ENCODE measurements at regions of chr1 and their contacts with region 1.

Region 1: DNA sequence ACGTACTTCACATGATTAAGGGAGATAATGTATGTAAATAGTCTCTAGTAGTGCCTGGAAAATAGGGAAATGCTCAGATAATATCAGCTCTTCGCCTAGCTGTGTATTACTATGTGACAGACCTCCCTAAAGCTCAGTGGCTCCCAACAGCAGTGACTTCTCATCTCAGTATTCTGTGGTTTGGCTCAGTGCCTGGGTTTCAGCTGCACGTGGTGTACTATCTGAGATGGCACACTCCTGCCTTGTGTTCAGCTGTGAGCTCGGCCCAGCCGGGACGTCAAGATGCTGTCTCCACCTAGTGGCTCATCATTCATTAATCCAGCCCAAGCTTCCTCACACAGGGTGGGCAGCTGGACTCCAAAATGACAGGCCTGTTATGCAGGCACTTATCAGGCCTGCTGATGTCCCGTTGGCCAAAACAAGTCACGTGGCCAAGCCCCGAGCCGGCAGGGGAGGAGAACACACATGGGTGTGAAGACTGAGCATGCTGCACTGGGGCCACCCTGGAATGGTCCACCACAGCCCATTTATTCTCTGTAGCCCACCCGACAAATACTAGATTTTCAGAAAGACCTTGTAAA is 17.8 kb downstream of the SLFNL1 start:
- DNase-seq: peak; percentile 98
- H3K4me3 Mint-ChIP-seq: no peak overlapping the region
- H3K27ac Mint-ChIP-seq: no peak overlapping the region
- H3K4me1 Mint-ChIP-seq: peaks cover 32% of the 10 kb centered on the region
- H3K27me3 Mint-ChIP-seq: no peaks in the 10 kb centered on the region
- CTCF ChIP-seq: peak; percentile 47

Region 2: GRCh38 chr1:40373338-40374283 is 630.1 kb before region 1 on chr1 and contains the start of gene SMAP2:
- CTCF ChIA-PET with region 1: no interaction called
- POLR2A ChIA-PET with region 1: no interaction called
- intact Hi-C with region 1: no loop called
- DNase-seq: peak; percentile 96
- H3K4me3 Mint-ChIP-seq: peak within 1 kb of the TSS; percentile 90
- H3K27ac Mint-ChIP-seq: peak within 1 kb of the TSS; percentile 69
- H3K4me1 Mint-ChIP-seq: peaks cover 19% of the 10 kb centered on the region
- H3K27me3 Mint-ChIP-seq: no peaks in the 10 kb centered on the region
- CTCF ChIP-seq: no peak
- total RNA-seq, gene SMAP2: 20.2 and 21.2 TPM in 2 replicates

Region 3: GRCh38 chr1:40901886-40902852 is 101.6 kb before region 1 on chr1:
- CTCF ChIA-PET with region 1: no interaction called
- POLR2A ChIA-PET with region 1: no interaction called
- intact Hi-C with region 1: no loop called
- DNase-seq: peak; percentile 83
- H3K4me3 Mint-ChIP-seq: no peak overlapping the region
- H3K27ac Mint-ChIP-seq: peak overlapping the region; percentile 54
- H3K4me1 Mint-ChIP-seq: peaks cover 30% of the 10 kb centered on the region
- H3K27me3 Mint-ChIP-seq: no peaks in the 10 kb centered on the region
- CTCF ChIP-seq: no peak

Region 4: DNA sequence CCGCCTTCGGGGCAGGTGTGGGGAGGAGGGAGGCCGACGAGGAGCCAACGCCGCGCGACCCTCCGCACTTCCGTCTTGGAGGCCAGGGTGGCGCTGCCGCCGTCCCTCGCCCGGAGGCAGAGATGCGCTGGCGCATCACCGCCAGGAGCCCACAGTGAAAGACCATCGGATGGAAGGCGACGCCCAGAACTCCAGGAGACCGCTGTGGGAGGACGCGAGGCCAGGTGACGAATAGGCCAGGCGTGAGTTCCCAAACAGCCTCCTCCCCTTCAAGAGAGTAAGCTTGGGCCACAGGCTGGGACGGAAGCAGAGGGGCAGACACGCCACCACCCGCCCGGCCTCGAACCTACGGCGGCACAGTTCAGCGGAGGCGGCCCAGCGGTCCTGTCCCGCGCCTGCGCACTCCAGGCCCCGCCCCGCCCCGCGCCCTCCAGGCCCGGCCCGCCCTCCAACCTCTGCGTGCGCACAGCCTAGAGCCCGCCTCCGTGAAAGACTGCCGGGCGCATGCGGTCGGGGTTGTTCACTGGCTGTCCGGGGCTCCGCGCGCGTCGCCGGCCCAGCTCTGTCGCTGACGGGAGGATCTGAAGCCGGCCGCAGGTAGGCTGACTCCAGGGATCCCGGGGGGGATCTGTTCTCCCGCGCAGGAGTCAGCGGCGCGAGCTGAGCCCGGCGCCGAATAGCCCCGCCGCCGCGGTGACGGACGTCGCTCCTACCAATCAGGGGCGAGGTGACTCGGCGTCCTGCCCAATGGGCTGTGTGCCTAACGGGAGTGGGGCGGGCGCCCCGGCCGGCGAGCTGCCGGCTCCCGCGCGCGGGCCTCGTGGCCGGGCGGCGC is 24.3 kb before region 1 on chr1 and contains the start of gene CTPS1:
- CTCF ChIA-PET with region 1: interaction called, 10 read pairs
- POLR2A ChIA-PET with region 1: interaction called, 33 read pairs
- intact Hi-C with region 1: no loop called
- DNase-seq: peak; percentile 91
- H3K4me3 Mint-ChIP-seq: peak within 1 kb of the TSS; percentile 82
- H3K27ac Mint-ChIP-seq: peak within 1 kb of the TSS; percentile 90
- H3K4me1 Mint-ChIP-seq: peaks cover 17% of the 10 kb centered on the region
- H3K27me3 Mint-ChIP-seq: no peaks in the 10 kb centered on the region
- CTCF ChIP-seq: no peak
- total RNA-seq, gene CTPS1: 54.1 and 69.9 TPM in 2 replicates

Region 5: DNA sequence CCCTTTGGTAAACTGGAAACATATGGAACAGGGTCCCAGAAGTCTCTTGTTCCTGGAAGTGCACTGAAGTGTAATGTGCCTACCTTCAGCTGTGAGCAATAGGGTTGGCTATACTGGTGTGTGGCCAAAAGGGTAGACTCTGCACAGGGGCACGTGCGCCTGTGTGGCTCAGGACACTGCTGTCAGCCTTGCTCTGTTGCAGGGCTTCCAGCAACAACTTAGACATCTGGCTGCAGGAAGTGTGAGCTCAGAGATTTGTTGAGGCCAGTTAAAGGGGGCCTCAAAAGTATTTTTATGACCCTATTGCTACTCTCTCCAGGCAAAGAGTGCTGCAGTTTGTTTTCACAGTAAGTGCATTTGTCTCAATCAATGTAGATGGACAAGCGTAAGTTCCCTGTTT is 16.8 kb before region 1 on chr1:
- CTCF ChIA-PET with region 1: interaction called, 15 read pairs
- POLR2A ChIA-PET with region 1: interaction called, 33 read pairs
- intact Hi-C with region 1: no loop called
- DNase-seq: no peak
- H3K4me3 Mint-ChIP-seq: no peak overlapping the region
- H3K27ac Mint-ChIP-seq: no peak overlapping the region
- H3K4me1 Mint-ChIP-seq: peaks cover 11% of the 10 kb centered on the region
- H3K27me3 Mint-ChIP-seq: no peaks in the 10 kb centered on the region
- CTCF ChIP-seq: no peak